ENCODE measurements at regions of chr1 and their contacts with region 1.

Region 1: GRCh38 chr1:187051618-187052232 is 223.0 kb downstream of the PLA2G4A start:
- DNase-seq: peak; percentile 18 to 55
- ATAC-seq: peak; percentile 62 to 83; a peak in 4 of 6 replicates
- H3K4me3 ChIP-seq: no peak overlapping the region
- H3K27ac ChIP-seq: no peak overlapping the region
- H3K4me1 ChIP-seq: no peaks in the 10 kb centered on the region
- CTCF ChIP-seq: peak; percentile 77
- EP300 ChIP-seq: no peak
- POLR2A ChIP-seq: no peak
- RAD21 ChIP-seq: peak; percentile 73 to 83

Region 2: DNA sequence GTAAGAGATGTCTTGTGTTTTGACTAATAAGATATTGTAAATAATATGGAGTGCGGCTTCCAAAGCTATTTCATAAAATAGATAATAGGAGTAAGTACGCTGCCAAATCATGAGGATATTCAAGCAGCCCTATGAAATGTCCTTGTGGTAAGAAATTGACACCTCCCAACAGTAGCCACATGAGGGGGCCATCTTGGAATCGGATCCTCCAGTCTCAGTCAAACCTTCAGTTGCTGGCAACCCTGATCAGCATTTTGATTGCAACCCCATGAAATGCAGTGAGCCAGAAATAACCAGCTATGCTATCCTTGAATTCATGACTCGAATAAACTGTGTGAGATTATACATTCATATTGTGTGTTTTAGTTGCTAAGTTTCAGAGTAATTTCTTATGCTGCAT is 10.6 kb before region 1 on chr1:
- CTCF ChIA-PET with region 1: interaction called, 14 read pairs
- POLR2A ChIA-PET with region 1: no interaction called
- DNase-seq: no peak
- ATAC-seq: no peak
- H3K4me3 ChIP-seq: no peak overlapping the region
- H3K27ac ChIP-seq: no peak overlapping the region
- H3K4me1 ChIP-seq: no peaks in the 10 kb centered on the region
- CTCF ChIP-seq: no peak
- EP300 ChIP-seq: no peak
- POLR2A ChIP-seq: no peak
- RAD21 ChIP-seq: no peak

Region 3: GRCh38 chr1:187067160-187067559 is 15.4 kb after region 1 on chr1:
- CTCF ChIA-PET with region 1: interaction called, 13 read pairs
- POLR2A ChIA-PET with region 1: no interaction called
- DNase-seq: no peak
- ATAC-seq: no peak
- H3K4me3 ChIP-seq: no peak overlapping the region
- H3K27ac ChIP-seq: no peak overlapping the region
- H3K4me1 ChIP-seq: no peaks in the 10 kb centered on the region
- CTCF ChIP-seq: no peak
- EP300 ChIP-seq: no peak
- POLR2A ChIP-seq: no peak
- RAD21 ChIP-seq: no peak